CD8-positive, alpha-beta T cell (primary cell): ENCODE measurements at regions of chr22 and their contacts with region 1.

Region 1: DNA sequence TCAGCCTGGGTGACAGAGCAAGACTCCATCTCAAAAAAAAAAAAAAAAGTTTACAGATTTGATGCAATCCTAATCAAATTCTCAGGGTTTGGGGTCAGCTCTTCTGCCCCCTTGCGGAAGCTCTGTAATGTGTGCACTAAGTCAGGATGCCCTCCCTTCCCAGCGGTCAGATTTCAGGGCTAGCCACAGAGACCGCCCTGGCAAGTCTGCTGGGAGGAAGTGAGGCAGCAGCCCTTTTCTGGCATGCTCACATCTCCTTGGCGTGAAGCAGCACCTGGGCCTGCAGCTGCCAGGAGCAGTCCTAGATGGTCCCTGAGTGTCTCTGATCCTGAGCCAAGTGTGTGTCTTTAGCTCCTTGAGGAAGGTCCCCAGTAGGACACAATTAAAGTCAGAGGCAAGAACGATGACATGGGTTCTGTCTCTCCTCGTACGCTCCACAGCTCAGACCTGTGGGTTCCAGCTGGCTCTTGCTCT is 10.9 kb upstream of the APOBEC3C start:
- DNase-seq: peak; percentile 43 to 92 (median 76)
- ATAC-seq: peak; percentile 83
- H3K4me3 ChIP-seq: no peak overlapping the region
- H3K4me3 Mint-ChIP-seq: no peak overlapping the region
- H3K27ac ChIP-seq: no peak overlapping the region
- H3K27ac Mint-ChIP-seq: peak overlapping the region; percentile 27
- H3K4me1 ChIP-seq: peaks cover 10% of the 10 kb centered on the region
- H3K4me1 Mint-ChIP-seq: peaks cover 12% of the 10 kb centered on the region
- H3K27me3 ChIP-seq: no peaks in the 10 kb centered on the region
- H3K27me3 Mint-ChIP-seq: peaks cover under 1% of the 10 kb centered on the region
- CTCF ChIP-seq: peak; percentile 68

Region 2: DNA sequence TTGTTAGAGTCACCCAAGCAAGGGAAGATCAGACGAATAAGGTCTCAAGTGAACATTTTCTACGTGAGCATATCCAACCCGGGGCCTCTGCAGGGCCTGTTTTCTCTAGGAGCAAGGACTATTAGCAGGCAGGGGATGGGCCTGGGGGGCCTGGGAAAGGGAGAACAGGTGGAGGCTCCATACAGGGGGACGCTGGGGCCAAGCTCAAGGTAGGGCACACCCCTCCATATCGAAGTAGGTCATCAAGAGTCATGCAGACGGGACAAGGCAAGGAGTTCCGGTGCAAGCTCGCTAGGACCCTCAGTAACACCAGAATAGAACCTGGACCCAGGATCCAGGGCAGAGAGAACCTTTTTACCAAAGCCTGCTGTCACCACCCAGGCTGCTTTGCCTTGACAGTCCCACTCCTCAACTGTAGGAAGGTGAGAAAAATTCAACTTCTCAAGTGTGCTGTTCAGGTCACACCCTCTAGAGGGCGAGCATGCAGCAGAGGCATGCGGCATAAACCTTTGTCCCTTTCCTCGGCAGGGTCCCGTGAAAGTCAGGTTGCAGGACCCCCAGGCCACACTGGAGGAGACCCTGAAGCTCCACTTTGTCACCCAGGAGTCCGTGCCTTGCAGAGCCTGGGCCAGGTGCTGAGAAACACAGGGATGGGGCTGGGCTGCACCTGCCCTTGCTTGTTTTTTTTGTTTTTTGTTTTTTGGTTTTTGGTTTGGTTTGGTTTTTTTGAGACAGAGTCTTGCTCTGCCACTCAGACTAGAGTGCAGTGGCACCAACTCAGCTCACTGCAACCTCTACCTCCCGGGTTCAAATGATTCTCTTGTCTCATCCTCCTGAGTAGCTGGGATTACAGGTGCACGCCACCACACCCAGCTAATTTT is 29.7 kb before region 1 on chr22:
- CTCF ChIA-PET with region 1: interaction called, 34 read pairs
- POLR2A ChIA-PET with region 1: no interaction called
- intact Hi-C with region 1: loop called (anchors 1 kb)
- DNase-seq: peak in 8 of 9 experiments; percentile 41 to 75 (median 59)
- ATAC-seq: peak; percentile 83
- H3K4me3 ChIP-seq: no peak overlapping the region
- H3K4me3 Mint-ChIP-seq: no peak overlapping the region
- H3K27ac ChIP-seq: no peak overlapping the region
- H3K27ac Mint-ChIP-seq: no peak overlapping the region
- H3K4me1 ChIP-seq: no peaks in the 10 kb centered on the region
- H3K4me1 Mint-ChIP-seq: peaks cover 2% of the 10 kb centered on the region
- H3K27me3 ChIP-seq: peaks cover 0 to 8% of the 10 kb centered on the region in 2 experiments
- H3K27me3 Mint-ChIP-seq: peaks cover 12% of the 10 kb centered on the region
- CTCF ChIP-seq: peak; percentile 73

Region 3: DNA sequence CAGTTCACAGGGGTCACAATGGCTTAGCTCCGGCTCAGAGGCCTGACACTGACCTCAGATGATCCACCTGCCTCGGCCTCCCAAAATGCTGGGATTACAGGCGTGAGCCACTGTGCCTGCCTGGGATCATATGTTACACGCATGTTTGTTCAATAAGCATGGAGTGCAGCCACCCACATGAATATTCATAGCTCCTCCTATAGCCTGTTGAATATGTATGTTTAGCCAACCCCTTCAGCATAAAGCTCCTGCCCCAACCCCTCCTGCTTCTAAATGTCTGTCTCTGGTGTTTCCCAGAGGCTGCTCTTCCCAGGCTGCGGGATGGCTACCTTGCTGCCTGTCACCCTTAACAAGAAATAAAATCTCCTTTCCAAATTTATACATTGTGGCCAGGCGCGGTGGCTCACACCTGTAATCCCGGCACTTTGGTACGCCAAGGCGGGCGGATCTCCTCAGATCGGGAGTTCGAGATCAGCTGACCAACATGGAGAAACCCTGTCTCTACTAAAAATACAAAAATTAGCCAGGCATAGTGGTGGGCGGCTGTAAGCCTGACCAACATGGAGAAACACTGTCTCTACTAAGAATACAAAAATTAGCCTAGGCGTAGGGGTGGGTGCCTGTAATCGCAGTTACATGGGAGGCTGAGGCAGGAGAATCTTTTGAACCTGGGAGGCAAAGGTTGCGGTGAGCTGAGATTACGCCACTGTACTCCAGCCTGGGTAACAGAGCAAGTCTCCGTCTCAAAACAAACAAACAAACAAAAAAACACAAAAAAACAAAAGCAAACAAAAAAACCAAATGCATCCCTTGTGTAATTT is 36.3 kb after region 1 on chr22:
- CTCF ChIA-PET with region 1: interaction called, 3 read pairs
- POLR2A ChIA-PET with region 1: no interaction called
- intact Hi-C with region 1: loop called in 1 of 2 experiments (anchors 5 kb)
- DNase-seq: no peak
- ATAC-seq: no peak
- H3K4me3 ChIP-seq: peak overlapping the region in 1 of 2 experiments; percentile 65
- H3K4me3 Mint-ChIP-seq: peak overlapping the region; percentile 86
- H3K27ac ChIP-seq: peak overlapping the region in 1 of 2 experiments; percentile 54
- H3K27ac Mint-ChIP-seq: peak overlapping the region; percentile 93
- H3K4me1 ChIP-seq: peaks cover 18% of the 10 kb centered on the region
- H3K4me1 Mint-ChIP-seq: peaks cover 43% of the 10 kb centered on the region
- H3K27me3 ChIP-seq: no peaks in the 10 kb centered on the region
- H3K27me3 Mint-ChIP-seq: no peaks in the 10 kb centered on the region
- CTCF ChIP-seq: no peak

Region 4: GRCh38 chr22:39123751-39124601 is 120.8 kb after region 1 on chr22:
- CTCF ChIA-PET with region 1: interaction called, 63 read pairs
- POLR2A ChIA-PET with region 1: no interaction called
- intact Hi-C with region 1: no loop called
- DNase-seq: no peak
- ATAC-seq: no peak
- H3K4me3 ChIP-seq: no peak overlapping the region
- H3K4me3 Mint-ChIP-seq: no peak overlapping the region
- H3K27ac ChIP-seq: no peak overlapping the region
- H3K27ac Mint-ChIP-seq: no peak overlapping the region
- H3K4me1 ChIP-seq: no peaks in the 10 kb centered on the region
- H3K4me1 Mint-ChIP-seq: peaks cover 7% of the 10 kb centered on the region
- H3K27me3 ChIP-seq: no peaks in the 10 kb centered on the region
- H3K27me3 Mint-ChIP-seq: no peaks in the 10 kb centered on the region
- CTCF ChIP-seq: no peak

Region 5: DNA sequence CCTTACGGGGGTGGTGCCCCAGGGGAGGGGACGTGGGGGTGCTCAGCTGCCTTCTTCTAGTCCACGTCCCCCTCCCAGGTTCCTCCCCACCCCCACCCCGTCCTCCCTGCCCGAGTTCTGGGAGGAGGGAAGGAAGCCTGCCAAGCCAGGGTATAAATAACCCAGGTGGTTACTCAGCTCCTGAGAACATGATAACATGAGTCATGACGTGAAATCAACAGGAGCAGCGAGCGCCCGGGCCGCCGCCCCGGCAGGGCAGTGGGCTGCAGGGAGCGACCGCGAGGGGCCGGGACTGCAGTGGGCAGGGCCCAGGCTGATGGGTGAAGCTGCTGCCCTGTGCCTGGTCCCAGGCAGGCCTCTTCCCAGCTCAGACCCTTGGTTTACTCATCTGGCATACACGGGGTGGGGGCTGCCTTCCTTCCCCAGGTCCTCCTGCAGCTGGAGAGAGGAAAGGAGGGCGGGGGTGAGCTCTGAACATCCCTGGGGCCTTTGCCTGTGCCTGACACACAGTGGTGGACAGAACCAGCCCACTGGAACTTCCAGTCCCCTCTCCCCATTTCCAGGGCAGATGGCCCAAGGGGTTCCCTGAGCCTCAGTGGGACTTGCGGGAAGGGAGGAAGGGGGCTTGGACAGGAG is 250.4 kb after region 1 on chr22:
- CTCF ChIA-PET with region 1: no interaction called
- POLR2A ChIA-PET with region 1: no interaction called
- intact Hi-C with region 1: no loop called
- DNase-seq: peak in 4 of 9 experiments; percentile 15 to 41 (median 30)
- ATAC-seq: peak; percentile 61
- H3K4me3 ChIP-seq: no peak overlapping the region
- H3K4me3 Mint-ChIP-seq: no peak overlapping the region
- H3K27ac ChIP-seq: no peak overlapping the region
- H3K27ac Mint-ChIP-seq: no peak overlapping the region
- H3K4me1 ChIP-seq: peaks cover 30% of the 10 kb centered on the region
- H3K4me1 Mint-ChIP-seq: peaks cover 21% of the 10 kb centered on the region
- H3K27me3 ChIP-seq: peaks cover 3 to 5% of the 10 kb centered on the region in 2 experiments
- H3K27me3 Mint-ChIP-seq: peaks cover 7% of the 10 kb centered on the region
- CTCF ChIP-seq: no peak